IMR-90 (cell line): ENCODE measurements at regions of chr9 and their contacts with region 1.

Region 1: GRCh38 chr9:137672907-137673791 is 54.3 kb downstream of the EHMT1 start:
- DNase-seq: peak; percentile 79
- ATAC-seq: peak; percentile 87
- H3K4me3 ChIP-seq: no peak overlapping the region
- H3K27ac ChIP-seq: no peak overlapping the region
- H3K4me1 ChIP-seq: peaks cover 17% of the 10 kb centered on the region
- H3K27me3 ChIP-seq: no peaks in the 10 kb centered on the region
- CTCF ChIP-seq: peak; percentile 89
- POLR2A ChIP-seq: peak; percentile 33; the same call in 1 of the 2 replicates
- RAD21 ChIP-seq: peak; percentile 91

Region 2: DNA sequence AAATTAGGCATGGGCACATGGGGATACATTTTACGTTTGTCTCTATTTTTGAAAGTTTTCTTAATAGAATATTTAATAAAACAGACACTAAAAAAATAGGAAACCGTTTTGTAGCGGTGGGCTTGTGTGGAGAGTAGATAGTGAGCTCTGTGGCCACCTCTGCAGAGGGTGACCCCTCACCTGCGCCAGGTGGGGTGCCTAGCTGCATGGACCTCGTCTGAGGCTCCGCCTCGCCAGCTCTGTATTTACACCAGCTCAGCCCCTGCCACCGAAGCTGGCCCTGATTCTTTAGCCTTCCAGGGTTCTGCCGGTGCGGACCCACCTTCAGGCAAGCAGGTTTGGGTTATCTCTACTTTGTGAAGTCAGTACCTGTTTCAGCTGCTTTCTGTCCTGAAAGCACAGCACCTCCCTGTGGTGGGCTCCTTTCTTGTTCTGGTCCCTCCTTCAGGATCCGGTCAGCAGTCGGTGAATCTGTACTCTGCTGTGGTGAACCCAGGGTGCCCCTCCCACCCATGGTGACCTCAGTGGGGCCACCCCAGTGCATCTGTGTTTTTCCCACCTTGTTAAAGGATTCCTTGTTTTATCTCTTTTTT is 99.2 kb after region 1 on chr9:
- CTCF ChIA-PET with region 1: interaction called, 3 read pairs
- POLR2A ChIA-PET with region 1: no interaction called
- dilution Hi-C with region 1: no loop called
- in situ Hi-C with region 1: no loop called
- intact Hi-C with region 1: loop called (anchors 5 kb)
- DNase-seq: no peak
- ATAC-seq: no peak
- H3K4me3 ChIP-seq: no peak overlapping the region
- H3K27ac ChIP-seq: no peak overlapping the region
- H3K4me1 ChIP-seq: no peaks in the 10 kb centered on the region
- H3K27me3 ChIP-seq: no peaks in the 10 kb centered on the region
- CTCF ChIP-seq: no peak
- POLR2A ChIP-seq: no peak
- RAD21 ChIP-seq: no peak; the same call in 1 of the 2 replicates

Region 3: GRCh38 chr9:137785704-137786161 is 112.6 kb after region 1 on chr9:
- CTCF ChIA-PET with region 1: no interaction called
- POLR2A ChIA-PET with region 1: no interaction called
- dilution Hi-C with region 1: no loop called
- in situ Hi-C with region 1: no loop called
- intact Hi-C with region 1: loop called (anchors 2 kb)
- DNase-seq: peak; percentile 6
- ATAC-seq: peak; percentile 30
- H3K4me3 ChIP-seq: no peak overlapping the region
- H3K27ac ChIP-seq: no peak overlapping the region
- H3K4me1 ChIP-seq: peaks cover 4% of the 10 kb centered on the region; the same call in 1 of the 2 replicates
- H3K27me3 ChIP-seq: no peaks in the 10 kb centered on the region
- CTCF ChIP-seq: no peak
- POLR2A ChIP-seq: no peak
- RAD21 ChIP-seq: no peak